Left cardiac atrium (tissue), 4 donors: ENCODE measurements at regions of chr11 and their contacts with region 1.

Region 1: DNA sequence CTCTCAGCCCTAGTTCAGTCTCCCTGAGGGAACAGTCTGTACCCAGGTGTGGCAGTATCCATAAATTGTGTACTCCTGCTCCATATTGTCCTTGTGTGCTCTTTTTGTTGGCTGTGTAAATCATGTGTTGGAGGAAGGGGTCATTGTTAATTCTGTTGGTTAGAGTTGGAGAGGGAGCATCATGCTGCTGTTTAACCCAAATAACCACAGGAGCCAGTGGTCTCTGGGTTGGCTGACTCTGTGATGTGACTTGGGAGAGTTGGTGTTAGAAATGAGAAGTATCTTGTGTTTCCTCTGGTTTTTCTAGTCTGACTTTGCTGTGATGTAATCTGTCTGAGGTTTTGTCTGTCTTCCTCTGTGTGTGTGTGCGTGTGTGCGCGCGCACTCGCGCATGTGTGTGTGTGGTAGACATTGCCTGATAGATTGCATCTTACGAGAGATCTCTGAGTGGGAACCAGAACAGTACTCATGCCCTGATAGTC is 30.5 kb downstream of the CTNND1 start:
- DNase-seq: peak; percentile 77
- ATAC-seq: peak; percentile 51 to 79

Region 2: DNA sequence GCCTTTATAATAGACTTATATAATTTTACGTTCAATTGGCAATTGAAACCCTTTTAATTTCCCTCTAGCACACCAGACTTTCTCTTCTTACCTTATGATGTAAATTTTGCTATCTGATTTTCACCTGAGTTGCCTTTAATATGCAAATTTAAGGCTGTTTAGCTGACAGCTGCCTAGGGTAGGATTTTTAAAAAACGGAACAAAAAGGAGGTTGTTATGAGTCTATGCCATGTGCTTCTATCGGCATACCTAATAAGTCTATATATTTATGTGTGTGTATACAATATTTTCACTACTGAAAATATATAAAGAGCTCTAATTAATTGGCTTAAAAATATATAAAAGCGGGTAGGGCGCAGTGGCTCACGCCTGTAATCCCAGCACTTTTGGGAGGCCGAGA is 62.6 kb before region 1 on chr11:
- intact Hi-C with region 1: no loop called
- DNase-seq: no peak
- ATAC-seq: no peak

Region 3: GRCh38 chr11:57741132-57742086 is 50.7 kb before region 1 on chr11 and contains the start of gene SELENOH:
- intact Hi-C with region 1: loop called in 1 of 2 experiments (anchors 10 kb)
- DNase-seq: peak; percentile 97
- ATAC-seq: peak; percentile 98
- total RNA-seq, gene SELENOH: 99.1 to 116 TPM

Region 4: DNA sequence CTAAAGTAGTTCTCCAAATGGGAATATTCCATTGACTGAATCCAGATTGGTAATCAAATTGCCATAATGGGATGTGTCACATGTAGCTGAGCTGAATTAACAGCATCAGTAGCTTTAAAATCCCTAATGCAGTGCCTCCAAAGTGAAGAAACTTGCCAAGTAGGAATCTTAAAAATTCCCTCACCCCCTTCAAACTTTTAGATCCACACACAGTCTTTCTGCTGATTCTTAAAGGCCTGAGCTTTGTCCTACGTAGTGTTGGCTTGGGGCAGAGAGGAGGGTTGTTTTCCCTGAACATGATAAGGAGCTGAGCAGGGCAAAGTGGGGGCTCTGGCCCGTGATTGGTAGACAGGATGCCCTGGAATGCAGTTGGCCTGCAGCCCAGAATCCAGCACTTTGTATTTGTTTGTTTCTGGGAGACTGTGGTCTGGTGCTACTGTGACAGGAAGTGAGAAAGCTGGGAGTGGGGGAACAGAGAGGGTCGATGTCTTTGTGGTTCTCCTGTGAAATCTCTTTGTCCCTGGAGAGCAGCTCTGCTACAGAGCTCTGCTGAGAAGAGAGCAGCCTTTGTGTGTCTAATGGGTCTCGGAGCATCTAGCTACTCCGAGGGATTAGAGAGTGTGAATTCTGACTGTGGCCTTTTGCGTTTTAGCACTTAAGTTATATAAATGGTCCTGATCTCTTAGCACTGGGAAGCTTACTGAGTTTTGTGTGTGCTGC is 13.6 kb before region 1 on chr11:
- intact Hi-C with region 1: loop called in 1 of 2 experiments (anchors 1 kb)
- DNase-seq: peak; percentile 94
- ATAC-seq: peak; percentile 93 to 94

Region 5: DNA sequence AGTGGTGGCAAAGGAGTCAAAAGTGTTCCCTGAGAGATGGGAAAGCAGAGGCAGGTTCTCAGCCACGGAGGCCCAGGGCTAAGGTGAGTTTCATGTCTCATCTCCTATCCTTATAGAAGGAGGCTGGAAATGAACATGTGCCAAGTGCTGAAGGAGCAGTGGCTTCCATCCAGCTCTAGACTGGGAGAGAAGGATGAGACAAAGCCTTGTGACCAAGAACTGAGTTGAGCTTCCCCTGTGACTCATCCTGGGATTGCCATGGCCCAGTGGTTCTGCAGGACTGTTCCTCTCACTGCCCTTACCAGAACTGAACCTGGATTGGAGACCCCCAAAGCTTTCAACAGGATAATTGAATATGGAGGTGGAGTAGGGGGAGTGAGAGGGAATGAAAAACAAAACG is 214.8 kb after region 1 on chr11:
- intact Hi-C with region 1: no loop called
- DNase-seq: no peak
- ATAC-seq: no peak